Activated CD8-positive, alpha-beta T cell treated with anti-CD3 and anti-CD28 coated beads, Interleukin-2, amount 10 ng/mL, durations not matched to agents 7 days and 5 days (primary cell): ENCODE measurements at regions of chr15 and their contacts with region 1.

Region 1: GRCh38 chr15:39786447-39787056 is 3.9 kb upstream of the FSIP1 start:
- DNase-seq: no peak
- ATAC-seq: no peak
- H3K4me3 Mint-ChIP-seq: no peak overlapping the region
- H3K27ac Mint-ChIP-seq: no peak overlapping the region
- H3K4me1 Mint-ChIP-seq: peaks cover 49% of the 10 kb centered on the region
- H3K27me3 Mint-ChIP-seq: no peaks in the 10 kb centered on the region

Region 2: GRCh38 chr15:39874890-39875549 is 88.5 kb after region 1 on chr15:
- CTCF ChIA-PET with region 1: interaction called, 18 read pairs
- POLR2A ChIA-PET with region 1: no interaction called
- DNase-seq: peak; percentile 31
- ATAC-seq: no peak
- H3K4me3 Mint-ChIP-seq: no peak overlapping the region
- H3K27ac Mint-ChIP-seq: no peak overlapping the region
- H3K4me1 Mint-ChIP-seq: no peaks in the 10 kb centered on the region
- H3K27me3 Mint-ChIP-seq: peaks cover 25% of the 10 kb centered on the region